Right ventricle myocardium superior (tissue), 1 donor: ENCODE measurements at regions of chr17 and their contacts with region 1.

Region 1: GRCh38 chr17:4565209-4566141 is 5.1 kb upstream of the GGT6 start:
- DNase-seq: peak; percentile 76
- ATAC-seq: peak; percentile 92

Region 2: DNA sequence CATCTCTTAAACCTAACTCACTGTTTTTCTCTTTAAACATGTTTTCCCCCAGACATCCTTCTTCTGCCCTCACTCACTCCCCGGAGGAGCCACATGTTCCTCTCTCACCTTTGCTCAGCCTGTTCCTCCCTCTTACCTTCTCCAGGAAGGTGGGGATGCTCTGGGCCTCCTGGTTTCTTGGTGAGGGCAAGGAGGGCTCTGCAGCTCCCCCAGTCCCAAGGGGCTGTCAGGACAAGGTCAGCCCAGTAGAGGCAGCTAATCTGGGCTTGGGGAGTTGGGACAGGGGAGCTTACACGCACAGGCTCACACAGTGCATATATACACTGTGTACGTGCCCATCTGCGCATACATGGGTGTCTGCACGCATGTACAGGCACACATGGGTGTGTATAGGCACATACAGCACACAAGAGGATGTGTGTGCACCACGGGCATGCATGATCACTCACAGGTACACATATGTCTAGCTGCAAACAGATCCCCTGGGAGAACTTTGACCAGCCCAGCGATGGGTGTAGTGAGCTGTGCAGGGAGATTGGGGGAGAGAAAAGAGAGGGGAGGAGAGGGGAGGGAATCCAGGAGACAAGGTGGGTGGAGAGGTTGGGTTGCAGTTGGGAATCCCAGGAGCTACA is 160.3 kb before region 1 on chr17:
- intact Hi-C with region 1: no loop called
- DNase-seq: no peak
- ATAC-seq: no peak

Region 3: DNA sequence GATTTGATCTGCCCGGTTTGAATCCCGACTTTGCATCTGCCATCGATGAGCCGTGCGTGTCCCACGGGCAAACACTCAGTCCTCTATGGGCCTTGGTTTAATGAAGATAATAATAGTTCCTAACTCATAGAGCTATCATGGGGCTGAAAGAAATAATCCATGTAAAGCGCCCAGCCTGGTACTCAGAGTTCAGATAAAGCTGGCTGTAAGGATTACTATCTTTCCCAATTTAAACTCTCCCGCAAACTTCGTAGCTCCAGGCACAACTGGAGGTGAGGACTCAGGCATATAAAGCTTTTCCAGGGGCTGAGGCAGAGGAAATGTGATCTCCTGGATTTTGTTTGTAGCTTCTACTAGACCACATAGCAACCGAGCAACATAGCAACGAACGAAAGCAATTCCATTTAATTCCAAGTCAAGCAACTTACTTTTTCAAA is 59.7 kb after region 1 on chr17:
- intact Hi-C with region 1: loop called (anchors 2 kb)
- DNase-seq: no peak
- ATAC-seq: peak; percentile 75